ENCODE measurements at regions of chr11 and their contacts with region 1.

Region 1: DNA sequence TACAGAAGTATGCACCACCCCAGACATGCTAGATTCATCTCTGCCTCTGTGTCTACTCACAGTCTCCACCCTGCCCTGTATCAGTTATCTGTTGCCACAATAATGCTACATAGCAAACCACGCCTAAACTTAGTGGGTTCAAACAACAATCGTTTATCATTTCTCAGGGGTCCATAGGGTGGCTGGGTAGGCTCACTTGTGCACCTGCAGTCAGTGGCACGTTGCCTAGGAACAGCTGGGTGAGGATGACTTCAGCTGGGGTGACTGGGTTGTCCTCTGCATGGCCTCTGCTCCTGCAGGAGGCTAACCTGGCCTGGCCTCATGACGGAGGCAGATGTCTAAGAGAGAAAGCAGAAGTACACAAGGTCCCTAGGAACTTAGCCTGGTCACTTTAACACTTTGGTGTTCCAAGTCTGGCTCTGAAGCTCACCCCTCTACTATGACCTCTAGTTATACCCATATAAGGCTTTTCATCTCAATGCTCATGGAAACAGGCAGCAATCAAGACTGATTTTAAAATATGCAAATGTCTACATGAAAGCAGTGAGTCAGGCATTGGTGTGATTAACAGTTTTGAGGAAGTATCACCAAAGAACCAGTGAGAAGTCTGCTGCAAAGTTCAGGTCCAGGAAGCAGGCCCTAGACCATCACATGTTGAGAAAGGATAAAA is 10.7 kb downstream of the OLFML1 start:
- DNase-seq: peak; percentile 49
- ATAC-seq: peak; percentile 78
- H3K4me3 Mint-ChIP-seq: peak overlapping the region; percentile 68
- H3K27ac Mint-ChIP-seq: peak overlapping the region; percentile 94
- H3K4me1 Mint-ChIP-seq: peaks cover 79% of the 10 kb centered on the region
- H3K27me3 Mint-ChIP-seq: no peaks in the 10 kb centered on the region
- CTCF ChIP-seq: no peak

Region 2: DNA sequence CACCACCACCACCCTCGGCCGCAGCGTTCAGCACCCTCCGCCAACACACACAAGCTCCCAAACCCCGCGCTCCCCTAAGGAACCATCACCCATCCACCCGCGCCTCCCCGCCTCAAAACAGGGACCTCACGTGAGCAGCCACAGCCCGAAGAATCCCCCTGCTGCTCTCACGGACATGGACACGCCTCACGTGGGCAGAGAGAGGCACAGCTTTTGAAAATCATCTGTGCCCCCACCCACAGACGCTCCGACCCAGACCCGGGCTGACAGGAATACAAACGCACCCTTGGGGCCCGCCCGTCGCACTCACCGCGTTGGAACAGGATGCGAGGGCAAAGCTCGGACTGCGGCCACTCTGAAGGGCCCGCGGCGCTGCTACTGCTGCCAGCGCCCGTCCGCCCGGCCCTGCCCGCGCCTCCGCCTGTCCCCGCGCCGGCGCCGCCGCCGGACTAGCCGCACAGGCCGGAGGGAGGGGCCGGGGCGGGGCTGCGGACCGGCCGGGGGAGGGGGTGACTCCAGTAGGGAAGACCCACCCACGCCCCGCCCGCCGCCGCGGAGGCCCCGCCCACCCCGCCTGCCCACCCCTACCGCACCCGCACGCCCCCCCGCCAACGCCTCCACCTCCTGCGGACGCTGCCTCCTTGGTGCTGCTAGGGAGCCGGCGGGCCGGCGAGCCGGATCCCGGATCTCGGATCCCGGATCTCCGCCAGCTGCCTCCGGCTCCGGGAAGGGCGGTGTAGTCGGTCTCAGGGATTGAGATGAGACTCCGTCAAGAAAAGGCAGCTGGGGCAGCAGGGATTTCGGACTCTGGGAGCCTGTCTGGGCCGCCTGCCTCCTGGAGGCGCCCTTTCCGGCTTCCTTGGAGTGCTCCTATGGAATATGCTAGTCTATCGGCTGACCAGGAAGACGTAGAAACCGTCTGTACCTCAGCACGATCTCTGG is 1022.3 kb before region 1 on chr11 and contains the start of gene TRIM3:
- CTCF ChIA-PET with region 1: no interaction called
- POLR2A ChIA-PET with region 1: no interaction called
- intact Hi-C with region 1: loop called (anchors 10 kb)
- DNase-seq: peak; percentile 75
- ATAC-seq: peak; percentile 91
- H3K4me3 Mint-ChIP-seq: peak within 1 kb of the TSS; percentile 86
- H3K27ac Mint-ChIP-seq: peak within 1 kb of the TSS; percentile 82
- H3K4me1 Mint-ChIP-seq: peaks cover 17% of the 10 kb centered on the region
- H3K27me3 Mint-ChIP-seq: no peaks in the 10 kb centered on the region
- CTCF ChIP-seq: no peak
- total RNA-seq, gene TRIM3: 8.3 and 9.0 TPM in 2 replicates

Region 3: DNA sequence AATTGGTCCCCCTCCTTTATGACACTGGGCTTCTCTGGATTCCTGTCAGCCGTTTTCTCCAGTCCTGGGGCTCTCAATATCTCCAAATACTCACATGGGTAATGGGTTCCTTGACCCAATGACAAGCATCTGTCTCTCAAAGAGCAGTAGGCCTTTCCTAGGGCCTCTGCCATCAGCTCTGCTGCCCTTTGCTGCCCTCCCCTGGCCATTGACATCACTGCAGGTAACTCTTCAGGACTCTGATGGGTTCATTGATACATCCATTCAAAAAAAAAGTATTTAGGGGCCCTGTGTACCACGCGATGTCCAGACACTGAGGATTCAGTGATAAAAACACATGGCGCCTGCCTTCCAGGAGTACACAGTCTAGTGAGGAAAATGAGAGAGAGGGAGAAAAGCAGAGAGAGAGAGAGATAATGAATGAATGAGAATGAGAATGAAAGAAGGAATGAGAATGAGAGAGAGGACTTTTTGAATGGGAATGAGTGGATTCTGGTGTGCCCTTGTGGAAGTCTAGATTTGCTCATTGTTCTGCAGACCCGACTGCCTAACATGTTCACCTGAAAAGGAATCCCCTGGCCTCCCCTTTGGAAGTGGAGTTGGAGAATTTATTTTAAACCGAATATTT is 53.3 kb before region 1 on chr11:
- CTCF ChIA-PET with region 1: interaction called, 3 read pairs
- POLR2A ChIA-PET with region 1: interaction called, 3 read pairs
- intact Hi-C with region 1: loop called (anchors 2 kb)
- DNase-seq: peak; percentile 67
- ATAC-seq: peak; percentile 100
- H3K4me3 Mint-ChIP-seq: no peak overlapping the region
- H3K27ac Mint-ChIP-seq: no peak overlapping the region
- H3K4me1 Mint-ChIP-seq: no peaks in the 10 kb centered on the region
- H3K27me3 Mint-ChIP-seq: no peaks in the 10 kb centered on the region
- CTCF ChIP-seq: peak; percentile 42

Region 4: DNA sequence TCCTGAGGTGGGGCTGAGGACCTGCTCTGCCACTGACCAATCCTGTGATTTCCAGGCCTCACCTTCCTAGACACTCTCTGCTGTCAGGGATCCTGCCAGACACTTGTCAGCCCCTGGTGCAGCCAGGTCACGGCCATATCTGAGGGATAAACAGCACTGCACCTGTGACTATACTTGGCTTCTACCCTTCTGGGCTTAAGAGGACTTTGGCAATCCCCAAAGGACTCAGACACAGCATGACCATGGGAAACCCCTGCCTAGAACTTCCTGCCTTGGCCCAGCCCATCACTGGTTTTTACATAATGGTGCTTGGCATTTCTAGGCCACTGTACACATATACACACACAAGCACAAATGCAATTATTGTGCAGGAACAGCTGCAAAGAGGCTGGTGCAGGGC is 22.3 kb before region 1 on chr11:
- CTCF ChIA-PET with region 1: no interaction called
- POLR2A ChIA-PET with region 1: interaction called, 11 read pairs
- intact Hi-C with region 1: loop called (anchors 1 kb)
- DNase-seq: peak; percentile 31
- ATAC-seq: peak; percentile 99
- H3K4me3 Mint-ChIP-seq: peak overlapping the region; percentile 47
- H3K27ac Mint-ChIP-seq: peak overlapping the region; percentile 74
- H3K4me1 Mint-ChIP-seq: peaks cover 29% of the 10 kb centered on the region
- H3K27me3 Mint-ChIP-seq: no peaks in the 10 kb centered on the region
- CTCF ChIP-seq: no peak

Region 5: GRCh38 chr11:7520981-7521487 is 25.0 kb after region 1 on chr11:
- CTCF ChIA-PET with region 1: interaction called, 3 read pairs
- POLR2A ChIA-PET with region 1: interaction called, 28 read pairs
- intact Hi-C with region 1: loop called (anchors 1 kb)
- DNase-seq: no peak
- ATAC-seq: peak; percentile 66
- H3K4me3 Mint-ChIP-seq: no peak overlapping the region
- H3K27ac Mint-ChIP-seq: no peak overlapping the region
- H3K4me1 Mint-ChIP-seq: no peaks in the 10 kb centered on the region
- H3K27me3 Mint-ChIP-seq: no peaks in the 10 kb centered on the region
- CTCF ChIP-seq: no peak

Region 6: DNA sequence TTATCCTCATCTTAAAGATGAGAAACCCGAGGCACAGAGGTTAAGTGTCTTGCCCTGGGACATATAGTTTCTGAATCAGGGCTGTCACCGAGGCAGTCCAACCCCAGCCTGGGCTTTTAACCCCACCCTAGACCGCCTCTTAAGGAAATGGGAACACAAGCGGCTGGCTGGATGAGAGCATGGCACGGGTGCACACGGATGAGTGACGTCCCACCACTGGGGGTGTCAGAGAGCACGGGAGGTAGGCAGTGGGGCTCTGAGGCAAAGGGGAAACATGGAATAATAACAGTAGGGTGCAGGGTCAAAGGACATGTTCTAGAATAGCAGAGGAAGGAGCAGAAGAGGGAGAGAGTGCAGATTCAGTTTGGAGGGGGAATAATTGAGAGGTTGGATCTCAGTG is 40.1 kb after region 1 on chr11:
- CTCF ChIA-PET with region 1: no interaction called
- POLR2A ChIA-PET with region 1: no interaction called
- intact Hi-C with region 1: no loop called
- DNase-seq: no peak
- ATAC-seq: no peak
- H3K4me3 Mint-ChIP-seq: no peak overlapping the region
- H3K27ac Mint-ChIP-seq: no peak overlapping the region
- H3K4me1 Mint-ChIP-seq: peaks cover 67% of the 10 kb centered on the region
- H3K27me3 Mint-ChIP-seq: no peaks in the 10 kb centered on the region
- CTCF ChIP-seq: no peak

Region 7: GRCh38 chr11:7555052-7555699 is 59.2 kb after region 1 on chr11:
- CTCF ChIA-PET with region 1: no interaction called
- POLR2A ChIA-PET with region 1: no interaction called
- intact Hi-C with region 1: no loop called
- DNase-seq: no peak
- ATAC-seq: no peak
- H3K4me3 Mint-ChIP-seq: no peak overlapping the region
- H3K27ac Mint-ChIP-seq: no peak overlapping the region
- H3K4me1 Mint-ChIP-seq: peaks cover 8% of the 10 kb centered on the region
- H3K27me3 Mint-ChIP-seq: no peaks in the 10 kb centered on the region
- CTCF ChIP-seq: no peak

Region 8: DNA sequence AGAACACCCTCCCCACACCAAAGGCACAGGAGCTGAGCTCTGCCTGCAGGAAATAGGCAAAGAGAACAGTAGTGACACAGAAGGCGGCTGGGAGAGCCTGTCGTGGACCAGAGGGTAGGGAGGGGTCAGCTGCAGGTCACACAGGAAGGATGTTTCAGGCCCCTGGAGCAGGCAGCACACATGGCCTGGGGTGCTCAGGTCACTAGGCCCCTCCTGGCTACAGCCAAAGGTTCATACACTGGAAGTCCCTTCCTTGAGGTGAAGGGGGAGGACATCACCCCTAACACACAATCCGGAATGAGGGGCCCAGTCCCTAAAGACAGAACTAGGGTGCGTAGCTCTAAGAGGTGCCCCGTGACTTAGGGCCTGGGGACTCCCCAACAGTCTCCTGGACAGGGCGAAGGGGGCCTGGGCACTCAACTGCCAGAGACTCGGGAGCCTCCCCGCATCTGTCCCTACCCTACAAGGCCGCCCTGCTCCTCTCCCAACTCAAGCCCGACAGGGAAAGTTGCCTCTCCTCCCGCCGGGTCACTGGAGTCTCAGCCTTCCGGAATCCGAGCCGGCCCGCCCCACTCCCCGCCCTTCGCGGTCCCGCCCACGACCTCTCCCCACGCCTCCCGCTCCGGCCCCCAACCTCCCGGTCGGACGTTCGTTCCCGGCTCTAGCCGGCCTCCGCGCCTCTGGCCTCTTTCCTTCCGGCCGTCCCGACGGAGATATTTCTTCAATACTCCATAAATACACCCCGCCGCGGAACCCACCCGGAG is 177.1 kb after region 1 on chr11 and contains the start of gene CYB5R2:
- CTCF ChIA-PET with region 1: no interaction called
- POLR2A ChIA-PET with region 1: interaction called, 3 read pairs
- intact Hi-C with region 1: loop called (anchors 1 kb)
- DNase-seq: peak; percentile 34
- ATAC-seq: peak; percentile 36
- H3K4me3 Mint-ChIP-seq: peak within 1 kb of the TSS; percentile 85
- H3K27ac Mint-ChIP-seq: peak within 1 kb of the TSS; percentile 86
- H3K4me1 Mint-ChIP-seq: peaks cover 52% of the 10 kb centered on the region
- H3K27me3 Mint-ChIP-seq: peaks cover 17% of the 10 kb centered on the region
- CTCF ChIP-seq: no peak
- total RNA-seq, gene CYB5R2: 22.3 and 25.9 TPM in 2 replicates

Region 9: GRCh38 chr11:7986768-7987559 is 490.9 kb after region 1 on chr11 and contains the start of gene EIF3F:
- CTCF ChIA-PET with region 1: no interaction called
- POLR2A ChIA-PET with region 1: no interaction called
- intact Hi-C with region 1: loop called (anchors 2 kb)
- DNase-seq: peak; percentile 73
- ATAC-seq: peak; percentile 97
- H3K4me3 Mint-ChIP-seq: peak within 1 kb of the TSS; percentile 93
- H3K27ac Mint-ChIP-seq: peak within 1 kb of the TSS; percentile 94
- H3K4me1 Mint-ChIP-seq: peaks cover 40% of the 10 kb centered on the region
- H3K27me3 Mint-ChIP-seq: no peaks in the 10 kb centered on the region
- CTCF ChIP-seq: peak; percentile 56
- total RNA-seq, gene EIF3F: 367 and 396 TPM in 2 replicates

Measured in activated B cell treated with CpG ODN at 0.5 μM for 24 hours (primary cell).